HEK293 (cell line): ENCODE measurements at regions of chr17 and their contacts with region 1.

Region 1: DNA sequence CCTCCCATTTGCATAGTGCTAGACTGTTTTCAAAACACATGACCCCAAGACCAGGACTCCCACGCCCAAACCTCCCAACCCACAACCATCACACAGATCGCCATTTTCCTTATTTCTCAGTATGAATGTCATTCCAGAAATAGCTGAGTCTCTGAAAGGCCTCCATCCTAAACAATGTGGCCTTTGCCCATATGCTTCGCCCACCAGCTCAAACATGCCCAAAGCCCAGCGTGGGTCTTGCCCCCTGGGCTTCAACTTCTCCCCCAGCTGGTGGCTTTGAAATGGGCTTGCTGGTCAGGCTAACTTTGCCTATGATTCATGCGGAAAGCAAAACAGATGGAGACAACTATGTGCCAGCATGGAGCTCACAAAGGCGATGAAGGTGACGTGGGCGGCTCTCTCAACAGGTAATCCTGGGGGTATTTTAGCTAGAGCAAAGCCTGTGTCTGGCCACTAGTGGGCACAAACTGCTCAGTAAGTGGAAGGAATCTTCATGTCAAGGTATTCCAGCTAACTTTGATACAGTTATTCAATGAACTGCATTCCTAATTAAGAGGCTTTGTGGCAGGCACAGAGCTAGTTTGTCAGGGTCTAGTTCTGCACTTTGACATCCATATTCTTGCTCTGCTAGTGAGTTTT is 17.1 kb downstream of the PMP22 start:
- H3K4me3 ChIP-seq: no peak overlapping the region
- H3K27ac ChIP-seq: no peak overlapping the region
- H3K4me1 ChIP-seq: no peaks in the 10 kb centered on the region
- CTCF ChIP-seq: no peak

Region 2: DNA sequence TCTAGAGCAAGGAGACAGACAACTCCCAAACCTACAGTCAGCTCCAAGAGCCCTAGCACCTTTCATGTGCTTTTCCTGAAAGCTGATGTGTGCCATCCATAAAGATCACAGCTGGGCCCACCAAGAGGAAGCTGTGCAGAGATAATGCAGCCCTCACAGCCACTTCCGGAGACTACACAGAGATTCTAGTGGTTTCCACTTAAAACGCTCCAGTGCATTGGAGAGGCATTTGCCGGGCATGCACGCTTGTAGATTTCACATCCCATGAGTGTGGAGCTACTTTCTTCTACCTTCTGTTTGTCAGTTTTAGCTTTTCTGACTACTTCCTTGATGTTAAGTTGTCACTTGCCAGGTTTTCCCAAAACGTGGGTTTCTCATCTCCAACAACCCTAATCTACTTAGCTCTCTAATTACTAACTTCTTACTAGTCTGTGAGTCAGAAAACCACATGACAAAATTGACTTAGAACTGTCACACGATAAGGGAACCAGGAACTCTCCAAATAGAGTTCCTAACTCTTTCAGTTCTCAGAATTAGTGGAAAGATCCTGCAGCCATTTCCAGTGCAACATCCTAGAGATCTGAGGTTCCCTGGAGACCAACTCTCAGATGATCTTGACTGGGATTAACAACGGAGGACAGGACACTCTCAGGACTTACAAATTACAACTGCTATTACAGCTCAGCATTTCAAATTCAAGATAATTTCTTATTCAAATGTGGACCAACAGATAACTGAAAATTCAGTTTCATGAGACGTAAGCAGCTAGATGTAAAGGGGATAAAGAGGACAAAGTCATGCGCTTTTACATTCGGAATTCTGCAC is 11.5 kb before region 1 on chr17:
- CTCF ChIA-PET with region 1: interaction called, 12 read pairs
- POLR2A ChIA-PET with region 1: no interaction called
- H3K4me3 ChIP-seq: no peak overlapping the region
- H3K27ac ChIP-seq: no peak overlapping the region
- H3K4me1 ChIP-seq: peaks cover 6% of the 10 kb centered on the region; the same call in 1 of the 2 replicates
- CTCF ChIP-seq: no peak

Region 3: DNA sequence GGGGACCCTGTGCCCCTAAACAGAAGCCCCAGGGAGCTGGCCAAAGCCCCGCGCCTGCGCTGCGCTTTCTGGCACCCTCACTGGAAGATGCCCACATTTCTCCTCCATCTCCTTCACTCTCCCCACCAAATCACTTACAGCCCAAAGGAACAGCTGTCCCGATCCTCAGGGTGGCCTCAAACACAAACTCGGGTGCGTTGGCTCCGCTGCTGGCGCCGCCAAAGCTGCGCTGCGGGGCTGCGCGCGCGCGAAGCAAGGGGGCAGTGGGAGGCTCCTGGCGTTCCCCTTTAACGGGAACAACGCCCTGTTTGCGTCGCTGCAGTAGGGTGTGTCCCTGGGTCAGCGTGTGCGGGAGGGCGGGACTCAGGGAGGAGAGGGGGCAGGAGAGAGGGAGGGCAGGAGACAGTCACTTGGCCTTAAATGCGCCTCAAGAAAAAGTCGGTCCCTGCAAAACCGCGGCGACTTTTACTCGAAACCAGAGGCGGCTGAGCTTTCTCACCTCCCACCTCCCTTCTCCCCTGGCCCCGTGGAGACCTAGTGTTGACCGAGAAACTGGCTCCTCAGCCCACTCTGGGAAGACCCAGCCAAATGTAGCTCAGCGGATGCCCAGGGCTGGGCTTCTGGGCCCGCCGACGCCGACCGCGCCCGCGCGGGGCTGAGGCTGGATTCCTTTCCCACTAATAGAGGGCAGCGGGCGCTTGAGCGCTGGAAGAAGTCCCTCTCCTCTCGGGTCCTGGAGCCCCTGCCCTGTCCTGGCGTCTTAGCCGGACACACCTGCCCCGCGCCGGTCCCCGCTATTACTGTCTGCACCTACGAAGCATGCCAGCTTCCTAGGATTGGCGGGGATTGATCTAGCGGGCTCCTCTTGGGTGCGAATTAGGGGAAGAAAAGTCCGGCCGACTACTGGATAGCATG is 14.5 kb after region 1 on chr17:
- CTCF ChIA-PET with region 1: interaction called, 47 read pairs
- POLR2A ChIA-PET with region 1: no interaction called
- H3K4me3 ChIP-seq: peak overlapping the region; percentile 37
- H3K27ac ChIP-seq: peak overlapping the region; percentile 42; the same call in 1 of the 2 replicates
- H3K4me1 ChIP-seq: peaks cover 7% of the 10 kb centered on the region
- CTCF ChIP-seq: peak; percentile 54; the same call in 1 of the 2 replicates

Region 4: DNA sequence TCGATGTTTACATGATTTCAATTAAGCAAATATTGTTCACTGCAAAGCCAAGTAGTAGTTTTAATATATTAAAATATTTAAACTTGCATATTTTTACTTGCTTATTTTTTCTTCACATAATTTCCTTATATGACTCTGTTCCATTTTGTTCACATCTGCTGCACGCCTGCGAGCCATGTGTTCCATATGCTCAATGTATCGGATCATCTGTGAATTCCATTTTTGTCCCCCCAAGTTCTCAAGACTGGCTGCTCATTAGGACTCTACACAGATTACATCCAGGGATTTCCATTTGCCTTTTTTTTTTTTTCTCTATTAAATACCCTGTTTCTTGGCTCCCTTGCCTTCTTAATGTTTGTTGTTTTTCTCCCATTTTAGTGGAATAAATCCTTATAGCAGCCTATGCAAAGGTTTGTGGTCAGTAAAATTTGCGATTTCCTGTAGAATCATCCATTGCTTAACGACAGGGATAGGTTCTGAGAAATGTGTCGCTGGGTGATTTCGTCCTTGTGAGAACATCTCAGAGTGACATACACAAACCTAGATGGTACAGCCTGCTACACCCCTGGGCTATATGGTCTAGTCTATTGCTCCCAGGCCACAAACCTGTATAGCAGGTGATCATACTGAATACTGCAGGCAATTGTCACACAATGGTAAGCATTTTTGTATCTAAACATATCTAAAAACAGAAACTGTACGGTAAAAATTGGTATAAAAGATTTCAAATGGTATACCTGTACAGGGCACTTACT is 123.5 kb after region 1 on chr17:
- CTCF ChIA-PET with region 1: no interaction called
- POLR2A ChIA-PET with region 1: no interaction called
- H3K4me3 ChIP-seq: no peak overlapping the region
- H3K27ac ChIP-seq: no peak overlapping the region
- H3K4me1 ChIP-seq: no peaks in the 10 kb centered on the region
- CTCF ChIP-seq: no peak

Region 5: DNA sequence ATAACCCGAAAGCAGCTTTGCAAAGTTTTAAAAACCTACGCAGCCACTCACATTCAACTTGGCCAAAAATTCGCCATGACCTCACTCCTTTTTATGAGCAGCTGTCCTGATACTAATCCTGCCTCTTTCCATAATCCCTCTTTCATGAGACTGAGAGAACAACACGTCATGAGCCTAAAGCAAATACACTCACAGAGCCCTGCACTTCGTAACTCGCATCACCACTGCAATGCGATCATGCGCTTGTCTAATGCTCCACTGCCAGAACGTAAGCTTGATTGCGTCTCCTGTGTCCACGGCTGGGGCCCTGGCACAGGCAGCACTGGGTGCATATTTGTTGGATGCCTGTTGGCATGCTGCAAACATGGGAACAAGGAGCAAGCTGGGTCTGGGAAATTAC is 183.2 kb after region 1 on chr17:
- CTCF ChIA-PET with region 1: no interaction called
- POLR2A ChIA-PET with region 1: no interaction called
- H3K4me3 ChIP-seq: no peak overlapping the region
- H3K27ac ChIP-seq: no peak overlapping the region
- H3K4me1 ChIP-seq: peaks cover under 1% of the 10 kb centered on the region; the same call in 1 of the 2 replicates
- CTCF ChIP-seq: no peak